ENCODE measurements at regions of chr15 and their contacts with region 1.

Region 1: DNA sequence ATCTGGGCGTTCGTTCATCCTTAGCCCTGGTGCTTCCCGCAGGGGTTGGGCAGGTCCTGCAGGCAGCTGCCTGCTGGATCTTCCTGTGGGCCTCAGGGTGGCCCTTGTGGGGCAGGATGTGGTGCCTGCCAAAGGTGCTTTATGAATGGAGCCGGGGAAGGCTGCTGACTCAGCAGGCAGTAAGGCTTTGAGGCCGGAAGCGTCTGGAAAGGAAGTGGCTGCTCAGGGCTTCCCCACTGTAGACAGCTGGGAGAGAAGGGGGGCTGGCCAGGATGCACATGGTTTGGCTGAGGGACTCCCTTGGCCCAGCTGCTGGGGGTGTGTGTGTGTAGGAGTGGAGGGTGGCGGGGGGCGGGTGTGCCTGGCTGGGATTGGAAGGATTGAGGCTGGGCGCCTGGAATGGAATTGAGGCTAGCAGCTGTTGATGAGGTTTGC is 12.9 kb downstream of the CD276 start:
- DNase-seq: peak; percentile 99
- H3K4me3 ChIP-seq: no peak overlapping the region
- H3K27ac ChIP-seq: peak overlapping the region; percentile 55
- H3K4me1 ChIP-seq: peaks cover 21% of the 10 kb centered on the region
- H3K27me3 ChIP-seq: no peaks in the 10 kb centered on the region
- CTCF ChIP-seq: no peak
- POLR2A ChIP-seq: peak; percentile 65

Region 2: DNA sequence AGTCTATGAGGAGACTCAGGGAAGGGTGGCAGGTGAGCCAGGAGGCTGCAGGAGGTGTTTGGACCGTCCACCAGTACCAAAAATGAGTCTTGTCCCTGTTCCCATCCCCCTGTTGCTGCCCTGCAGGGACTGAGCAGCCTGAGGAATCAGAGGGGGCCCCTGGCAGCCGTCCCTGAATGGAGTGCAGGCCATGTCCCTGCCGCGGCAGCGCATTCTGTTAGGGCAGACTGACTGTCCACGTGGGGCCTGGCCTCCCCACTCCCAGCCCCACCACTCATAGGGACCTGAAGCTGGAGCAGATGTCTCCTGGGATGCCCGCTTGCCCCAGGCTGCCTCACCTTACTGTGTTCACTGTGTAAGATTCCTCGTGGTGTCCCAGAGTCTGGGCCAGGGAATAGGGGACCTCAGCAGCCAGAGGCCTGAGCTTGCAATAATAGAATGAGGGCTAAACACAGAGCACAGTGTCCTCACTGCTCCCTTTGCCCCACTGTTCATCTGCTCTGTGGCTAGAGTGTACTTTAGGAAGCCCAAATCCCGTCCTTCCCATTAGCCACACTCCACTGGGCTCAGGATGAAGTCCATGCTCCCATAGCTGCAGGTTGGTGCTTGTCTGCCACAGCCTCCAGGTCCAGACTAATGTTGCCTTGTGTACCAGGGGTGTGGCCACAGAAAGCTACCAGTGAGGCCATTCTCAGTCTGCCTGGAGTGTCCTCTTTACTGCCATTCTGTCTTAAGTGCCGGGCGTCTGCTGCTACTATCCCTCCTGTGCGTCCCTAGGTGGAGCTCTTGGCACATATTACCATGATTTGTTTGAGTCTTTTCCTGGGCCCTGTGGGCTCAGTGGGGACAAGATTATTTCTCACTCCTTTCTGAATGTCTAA is 391.5 kb before region 1 on chr15:
- CTCF ChIA-PET with region 1: interaction called, 3 read pairs
- POLR2A ChIA-PET with region 1: no interaction called
- dilution Hi-C with region 1: no loop called
- intact Hi-C with region 1: loop called (anchors 2 kb)
- DNase-seq: peak; percentile 30
- H3K4me3 ChIP-seq: no peak overlapping the region
- H3K27ac ChIP-seq: no peak overlapping the region
- H3K4me1 ChIP-seq: no peaks in the 10 kb centered on the region
- H3K27me3 ChIP-seq: no peaks in the 10 kb centered on the region
- CTCF ChIP-seq: peak; percentile 41 to 42
- POLR2A ChIP-seq: no peak

Region 3: GRCh38 chr15:73567022-73567592 is 129.9 kb before region 1 on chr15:
- CTCF ChIA-PET with region 1: interaction called, 13 read pairs
- POLR2A ChIA-PET with region 1: no interaction called
- dilution Hi-C with region 1: no loop called
- intact Hi-C with region 1: no loop called
- DNase-seq: no peak
- H3K4me3 ChIP-seq: no peak overlapping the region
- H3K27ac ChIP-seq: no peak overlapping the region
- H3K4me1 ChIP-seq: peaks cover 10% of the 10 kb centered on the region
- H3K27me3 ChIP-seq: no peaks in the 10 kb centered on the region
- CTCF ChIP-seq: no peak
- POLR2A ChIP-seq: no peak

Region 4: GRCh38 chr15:73639464-73640188 is 57.4 kb before region 1 on chr15:
- CTCF ChIA-PET with region 1: interaction called, 207 read pairs
- POLR2A ChIA-PET with region 1: no interaction called
- dilution Hi-C with region 1: no loop called
- intact Hi-C with region 1: loop called (anchors 1 kb)
- DNase-seq: no peak
- H3K4me3 ChIP-seq: no peak overlapping the region
- H3K27ac ChIP-seq: no peak overlapping the region
- H3K4me1 ChIP-seq: no peaks in the 10 kb centered on the region
- H3K27me3 ChIP-seq: peaks cover 7 to 15% of the 10 kb centered on the region in 2 experiments
- CTCF ChIP-seq: no peak
- POLR2A ChIP-seq: no peak

Region 5: DNA sequence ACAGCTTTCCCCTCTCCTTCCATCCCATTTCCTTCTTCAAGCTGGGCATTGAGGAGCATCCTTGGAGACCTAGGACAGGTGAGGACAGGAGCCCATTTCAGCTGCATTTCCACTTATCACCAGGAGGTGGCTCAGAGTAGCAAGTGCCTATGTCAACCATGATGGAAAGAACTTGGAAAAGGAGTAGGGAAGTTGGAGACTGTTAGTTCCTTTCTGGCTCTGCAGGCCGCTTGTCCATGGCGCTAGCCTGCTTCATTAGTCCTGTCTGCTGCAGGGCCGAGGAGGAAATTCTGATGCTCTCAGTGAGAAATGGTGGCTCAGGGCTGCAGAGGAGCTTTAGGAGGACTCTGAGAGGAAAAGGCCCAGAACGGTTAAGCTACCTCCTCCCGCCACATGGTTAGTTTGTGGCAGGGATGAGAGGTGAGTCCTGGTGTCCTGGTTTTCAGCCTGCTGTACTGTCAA is 19.9 kb before region 1 on chr15:
- CTCF ChIA-PET with region 1: interaction called, 368 read pairs
- POLR2A ChIA-PET with region 1: no interaction called
- dilution Hi-C with region 1: no loop called
- intact Hi-C with region 1: loop called (anchors 1 kb)
- DNase-seq: peak; percentile 70
- H3K4me3 ChIP-seq: no peak overlapping the region
- H3K27ac ChIP-seq: no peak overlapping the region
- H3K4me1 ChIP-seq: no peaks in the 10 kb centered on the region
- H3K27me3 ChIP-seq: peaks cover 12 to 31% of the 10 kb centered on the region in 2 experiments
- CTCF ChIP-seq: peak; percentile 81
- POLR2A ChIP-seq: no peak

Region 6: DNA sequence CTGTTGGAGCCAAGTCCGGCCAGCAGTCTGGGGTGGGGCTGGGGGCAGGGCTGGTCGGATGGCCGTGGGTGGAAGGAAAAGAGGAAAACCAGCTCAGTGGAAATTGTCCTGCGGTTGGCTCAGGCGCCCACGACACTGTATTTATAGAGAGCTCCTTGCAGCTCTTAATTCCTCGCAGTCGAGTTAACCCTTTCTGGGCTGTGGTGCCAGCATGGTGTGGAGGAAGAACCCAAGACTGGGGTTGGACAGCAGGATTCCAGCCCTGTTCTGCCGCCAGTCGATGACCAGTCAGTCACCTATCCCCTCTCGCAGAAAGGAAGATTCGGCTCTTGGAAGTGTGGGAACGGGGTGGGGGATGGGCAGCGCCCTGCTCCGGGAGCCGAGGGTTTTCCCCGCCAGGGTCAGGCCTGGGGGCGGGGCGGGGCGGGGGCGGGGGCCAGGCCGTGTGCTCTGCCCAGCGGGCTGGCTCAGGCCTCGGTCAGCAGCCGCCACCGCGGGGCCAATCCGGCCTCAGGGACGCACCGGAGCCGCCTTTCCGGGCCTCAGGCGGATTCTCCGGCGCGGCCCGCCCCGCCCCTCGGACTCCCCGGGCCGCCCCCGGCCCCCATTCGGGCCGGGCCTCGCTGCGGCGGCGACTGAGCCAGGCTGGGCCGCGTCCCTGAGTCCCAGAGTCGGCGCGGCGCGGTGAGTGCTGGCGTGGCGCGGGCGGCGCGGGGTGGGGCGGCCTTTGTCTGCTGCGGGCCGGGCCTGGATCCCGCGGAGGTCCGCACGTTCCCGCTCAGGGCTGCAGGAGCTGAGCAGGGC is 13.1 kb before region 1 on chr15 and contains the start of gene CD276:
- CTCF ChIA-PET with region 1: interaction called, 368 read pairs
- POLR2A ChIA-PET with region 1: interaction called, 9 read pairs
- dilution Hi-C with region 1: no loop called
- intact Hi-C with region 1: loop called (anchors 1 kb)
- DNase-seq: peak; percentile 55
- H3K4me3 ChIP-seq: peak within 1 kb of the TSS; percentile 73 to 82 (median 79)
- H3K27ac ChIP-seq: peak within 1 kb of the TSS; percentile 51
- H3K4me1 ChIP-seq: peaks cover 43% of the 10 kb centered on the region
- H3K27me3 ChIP-seq: no peaks in the 10 kb centered on the region
- CTCF ChIP-seq: no peak
- POLR2A ChIP-seq: no peak
- total RNA-seq, gene CD276: 85.6 and 85.7 TPM in 2 replicates

Measured in endothelial cell of umbilical vein (primary cell).